Ascending aorta (tissue), 2 donors: ENCODE measurements at regions of chr17 and their contacts with region 1.

Region 1: GRCh38 chr17:12691182-12691581 is 25.5 kb downstream of the MYOCD start:
- DNase-seq: peak; percentile 48 to 94
- H3K4me3 ChIP-seq: no peak overlapping the region
- H3K27ac ChIP-seq: peak overlapping the region; percentile 93
- H3K4me1 ChIP-seq: peaks cover 10 to 41% of the 10 kb centered on the region in 2 donors
- H3K27me3 ChIP-seq: no peaks in the 10 kb centered on the region
- CTCF ChIP-seq: no peak

Region 2: DNA sequence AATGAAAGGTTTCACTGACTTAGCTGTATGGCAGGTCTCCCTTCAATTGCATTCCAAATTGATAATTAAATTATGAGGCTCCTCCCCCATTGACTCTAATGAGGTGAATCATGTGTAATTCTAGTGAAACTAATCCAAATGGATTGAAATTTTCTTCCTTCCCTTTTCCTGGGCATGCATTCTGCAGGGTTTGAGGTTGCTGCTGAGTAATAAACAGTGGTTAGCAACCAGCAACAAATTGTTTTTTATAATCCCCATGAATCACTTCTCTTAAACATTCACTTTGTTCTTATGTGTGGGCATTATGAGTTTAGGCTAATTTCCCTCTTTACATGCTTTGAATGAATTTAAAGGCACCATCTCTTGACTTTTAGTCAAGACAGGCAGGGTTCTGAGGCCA is 17.9 kb after region 1 on chr17:
- intact Hi-C with region 1: loop called (anchors 2 kb)
- DNase-seq: no peak
- H3K4me3 ChIP-seq: no peak overlapping the region
- H3K27ac ChIP-seq: no peak overlapping the region
- H3K4me1 ChIP-seq: peaks cover 4 to 20% of the 10 kb centered on the region in 2 donors
- H3K27me3 ChIP-seq: no peaks in the 10 kb centered on the region
- CTCF ChIP-seq: no peak

Region 3: DNA sequence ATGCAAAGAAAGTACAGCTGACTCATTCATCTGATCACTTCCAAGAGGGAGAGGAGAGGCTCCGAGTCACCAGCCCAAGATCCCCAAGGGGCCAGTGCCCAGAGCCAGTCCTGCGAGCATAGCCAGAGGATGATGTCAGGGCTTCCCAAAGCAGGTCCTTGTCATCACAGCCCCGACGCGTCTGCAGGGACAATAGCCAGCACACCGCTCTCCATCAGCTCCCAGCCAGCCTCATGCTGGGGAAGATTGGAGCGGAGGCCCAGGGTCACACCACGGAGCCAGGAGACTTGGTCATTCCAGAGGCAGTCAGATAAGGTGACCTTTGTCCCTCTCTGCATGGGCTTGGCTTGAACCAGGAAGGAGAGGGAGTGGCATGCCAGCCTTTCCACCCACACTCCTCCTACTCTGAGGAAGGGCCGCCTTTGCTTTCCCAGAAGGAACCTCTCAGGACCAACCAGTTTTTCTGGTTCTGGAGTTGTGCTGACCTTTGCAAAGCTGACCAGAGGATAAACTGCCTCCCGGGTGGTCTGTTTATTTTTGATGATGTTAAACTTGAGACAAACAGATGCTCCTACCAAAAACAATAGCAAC is 39.8 kb after region 1 on chr17:
- intact Hi-C with region 1: loop called (anchors 1 kb)
- DNase-seq: peak; percentile 77 to 96
- H3K4me3 ChIP-seq: no peak overlapping the region
- H3K27ac ChIP-seq: peak overlapping the region; percentile 81 to 91
- H3K4me1 ChIP-seq: peaks cover 0 to 35% of the 10 kb centered on the region in 2 donors
- H3K27me3 ChIP-seq: no peaks in the 10 kb centered on the region
- CTCF ChIP-seq: no peak